ENCODE measurements at regions of chr20 and their contacts with region 1.

Region 1: DNA sequence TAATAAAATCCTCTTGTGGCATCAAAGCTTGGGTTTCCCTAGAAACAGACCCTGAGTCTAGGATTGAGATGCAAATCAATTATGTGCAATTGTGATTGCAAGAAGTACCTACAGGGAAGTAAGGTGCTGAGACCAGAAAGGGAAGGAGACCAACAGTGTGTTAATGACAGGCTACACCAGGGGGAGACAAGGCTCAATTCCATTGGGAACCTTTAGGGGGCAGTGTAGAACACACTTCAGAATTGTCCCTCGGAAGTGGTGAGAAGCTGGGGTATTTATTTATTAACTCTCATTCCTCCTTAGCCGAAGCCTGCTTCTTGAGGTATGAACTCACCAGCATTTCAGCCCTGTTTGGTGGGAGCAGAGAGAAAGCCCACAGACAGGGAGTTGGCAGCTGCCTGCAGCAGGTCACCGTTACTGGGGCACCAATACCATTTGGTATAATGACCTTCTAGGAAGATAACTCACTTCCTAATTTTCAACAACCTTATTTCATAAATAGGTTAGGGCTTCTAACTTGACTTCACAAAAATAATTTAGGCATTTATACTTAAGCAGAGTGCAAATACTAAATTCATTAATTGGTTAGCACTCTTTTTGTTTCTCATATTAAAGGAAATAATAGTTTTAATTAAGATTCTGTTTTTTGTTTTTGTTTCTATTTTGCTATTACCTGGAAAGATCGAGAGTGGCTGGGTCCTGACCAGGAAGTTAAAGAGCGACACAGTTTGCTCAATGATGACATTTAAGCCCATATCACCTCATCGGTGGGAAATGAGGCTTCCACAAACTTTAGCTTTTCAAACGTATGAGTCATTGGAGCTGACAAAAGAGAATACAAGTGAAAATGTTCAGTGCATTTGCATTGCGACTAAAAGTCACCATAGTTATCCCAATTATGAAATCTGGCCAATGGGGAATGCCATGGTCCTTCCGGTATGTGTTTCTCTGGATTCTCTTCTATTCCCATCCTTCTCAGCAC is 94.8 kb downstream of the BTBD3 start:
- DNase-seq: peak; percentile 65
- ATAC-seq: peak; percentile 99
- H3K4me3 Mint-ChIP-seq: no peak overlapping the region
- H3K27ac Mint-ChIP-seq: no peak overlapping the region; the same call in 1 of the 2 replicates
- H3K4me1 Mint-ChIP-seq: peaks cover 18% of the 10 kb centered on the region
- H3K27me3 Mint-ChIP-seq: no peaks in the 10 kb centered on the region
- CTCF ChIP-seq: peak; percentile 92

Region 2: DNA sequence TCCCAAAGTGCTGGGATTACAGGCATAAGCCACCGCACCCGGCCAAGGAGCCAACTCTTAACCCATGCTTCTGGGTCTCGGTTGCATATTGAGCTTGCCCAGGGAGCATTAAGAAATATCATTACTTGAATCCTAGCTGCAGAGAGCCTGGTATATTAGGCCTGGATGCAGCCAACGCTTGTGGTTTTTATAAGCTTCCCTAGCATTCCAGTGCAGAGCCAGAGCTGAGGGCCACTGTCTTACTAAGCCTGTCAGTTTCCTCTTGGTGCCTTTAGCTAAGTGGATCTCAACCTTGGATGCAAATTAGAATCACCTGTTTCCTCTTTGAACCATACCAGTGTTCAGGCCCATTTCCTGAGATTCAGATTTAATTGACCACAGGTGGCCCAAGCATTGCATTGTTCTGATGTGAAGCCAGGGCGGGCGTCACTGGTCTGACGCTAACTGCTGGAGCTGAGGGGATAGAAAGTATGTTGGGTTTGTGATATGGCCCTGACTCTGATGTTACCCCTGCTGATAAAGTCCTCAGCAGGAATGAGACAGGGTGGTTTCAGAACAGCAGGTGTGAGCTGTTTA is 18.6 kb before region 1 on chr20:
- CTCF ChIA-PET with region 1: interaction called, 11 read pairs
- POLR2A ChIA-PET with region 1: no interaction called
- DNase-seq: peak; percentile 25
- ATAC-seq: peak; percentile 87
- H3K4me3 Mint-ChIP-seq: no peak overlapping the region
- H3K27ac Mint-ChIP-seq: 0 out of 2 replicates have a peak overlapping the region, but pooled peaks have one; percentile 46
- H3K4me1 Mint-ChIP-seq: peaks cover 17% of the 10 kb centered on the region
- H3K27me3 Mint-ChIP-seq: no peaks in the 10 kb centered on the region
- CTCF ChIP-seq: no peak

Region 3: DNA sequence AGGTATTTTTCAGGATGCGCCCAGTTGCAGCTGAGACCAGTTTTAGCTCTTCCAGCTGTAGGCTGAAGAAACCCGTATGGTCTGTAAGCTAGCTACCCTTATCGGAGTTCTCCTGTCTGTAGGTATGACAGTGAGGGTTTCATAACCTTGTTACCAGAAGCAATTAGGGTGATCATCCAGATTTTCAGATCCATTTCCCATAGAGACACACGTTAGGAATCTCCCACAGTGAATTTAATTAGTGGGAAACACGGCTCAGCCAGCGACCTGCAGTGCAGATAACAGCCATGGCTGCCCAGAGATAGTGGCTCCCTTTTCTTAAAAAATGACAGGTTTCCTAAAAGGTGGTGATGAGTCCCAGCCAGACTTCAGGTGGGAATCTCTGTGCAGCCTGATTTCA is 16.2 kb after region 1 on chr20:
- CTCF ChIA-PET with region 1: interaction called, 16 read pairs
- POLR2A ChIA-PET with region 1: no interaction called
- DNase-seq: no peak
- ATAC-seq: no peak
- H3K4me3 Mint-ChIP-seq: no peak overlapping the region
- H3K27ac Mint-ChIP-seq: no peak overlapping the region
- H3K4me1 Mint-ChIP-seq: no peaks in the 10 kb centered on the region
- H3K27me3 Mint-ChIP-seq: no peaks in the 10 kb centered on the region
- CTCF ChIP-seq: no peak

Region 4: GRCh38 chr20:12040759-12041158 is 28.2 kb after region 1 on chr20:
- CTCF ChIA-PET with region 1: interaction called, 12 read pairs
- POLR2A ChIA-PET with region 1: no interaction called
- DNase-seq: no peak
- ATAC-seq: no peak
- H3K4me3 Mint-ChIP-seq: no peak overlapping the region
- H3K27ac Mint-ChIP-seq: no peak overlapping the region
- H3K4me1 Mint-ChIP-seq: 0 out of 2 replicates have a peak, but pooled peaks cover 3% of the 10 kb centered on the region
- H3K27me3 Mint-ChIP-seq: no peaks in the 10 kb centered on the region
- CTCF ChIP-seq: no peak

Region 5: DNA sequence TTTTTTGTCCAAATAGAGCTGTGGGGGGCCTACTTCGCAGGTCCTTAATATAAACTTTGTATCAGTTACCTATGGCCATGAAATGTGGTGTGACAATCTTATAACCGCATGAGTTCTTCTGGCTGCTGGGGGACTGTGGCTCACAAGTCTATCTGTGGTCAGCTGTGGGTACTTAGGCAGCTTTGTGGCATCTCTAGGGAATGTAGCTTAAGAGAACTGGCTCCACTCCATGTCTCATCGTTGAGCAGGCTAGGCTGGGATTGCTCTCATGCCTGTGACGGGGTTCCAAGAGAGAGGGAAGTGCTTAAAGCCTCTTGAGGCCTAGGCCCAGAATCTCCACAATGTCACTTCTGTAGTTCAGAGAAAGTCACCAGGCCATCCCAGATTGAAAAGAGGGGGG is 45.7 kb after region 1 on chr20:
- CTCF ChIA-PET with region 1: interaction called, 17 read pairs
- POLR2A ChIA-PET with region 1: no interaction called
- DNase-seq: no peak
- ATAC-seq: peak; percentile 41; the same call in 1 of the 2 replicates
- H3K4me3 Mint-ChIP-seq: no peak overlapping the region
- H3K27ac Mint-ChIP-seq: 0 out of 2 replicates have a peak overlapping the region, but pooled peaks have one; percentile 52
- H3K4me1 Mint-ChIP-seq: peaks cover 13% of the 10 kb centered on the region
- H3K27me3 Mint-ChIP-seq: no peaks in the 10 kb centered on the region
- CTCF ChIP-seq: no peak

Region 6: DNA sequence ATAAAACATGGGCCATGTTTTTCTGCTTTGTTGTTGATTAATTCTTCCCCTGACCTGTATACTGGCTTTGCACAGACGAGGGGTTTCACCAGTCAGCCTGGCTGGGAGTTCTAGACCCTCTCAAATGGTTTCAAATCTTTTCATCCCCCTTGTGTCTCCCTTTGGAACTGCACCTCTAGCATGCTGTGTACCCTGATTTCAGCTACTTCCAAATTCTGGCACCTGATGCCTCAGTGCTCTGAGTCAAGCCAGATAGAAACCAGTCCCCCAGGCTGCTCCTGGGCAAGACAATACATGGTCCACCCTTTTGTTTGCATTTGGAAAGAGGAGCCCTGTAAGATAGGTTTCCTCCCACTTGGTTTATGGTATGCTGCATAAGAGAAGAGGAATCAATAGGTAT is 195.3 kb after region 1 on chr20:
- CTCF ChIA-PET with region 1: interaction called, 12 read pairs
- POLR2A ChIA-PET with region 1: no interaction called
- DNase-seq: peak; percentile 56
- ATAC-seq: peak; percentile 100
- H3K4me3 Mint-ChIP-seq: no peak overlapping the region
- H3K27ac Mint-ChIP-seq: no peak overlapping the region
- H3K4me1 Mint-ChIP-seq: no peaks in the 10 kb centered on the region
- H3K27me3 Mint-ChIP-seq: no peaks in the 10 kb centered on the region; the same call in 1 of the 2 replicates
- CTCF ChIP-seq: peak; percentile 78

Region 7: DNA sequence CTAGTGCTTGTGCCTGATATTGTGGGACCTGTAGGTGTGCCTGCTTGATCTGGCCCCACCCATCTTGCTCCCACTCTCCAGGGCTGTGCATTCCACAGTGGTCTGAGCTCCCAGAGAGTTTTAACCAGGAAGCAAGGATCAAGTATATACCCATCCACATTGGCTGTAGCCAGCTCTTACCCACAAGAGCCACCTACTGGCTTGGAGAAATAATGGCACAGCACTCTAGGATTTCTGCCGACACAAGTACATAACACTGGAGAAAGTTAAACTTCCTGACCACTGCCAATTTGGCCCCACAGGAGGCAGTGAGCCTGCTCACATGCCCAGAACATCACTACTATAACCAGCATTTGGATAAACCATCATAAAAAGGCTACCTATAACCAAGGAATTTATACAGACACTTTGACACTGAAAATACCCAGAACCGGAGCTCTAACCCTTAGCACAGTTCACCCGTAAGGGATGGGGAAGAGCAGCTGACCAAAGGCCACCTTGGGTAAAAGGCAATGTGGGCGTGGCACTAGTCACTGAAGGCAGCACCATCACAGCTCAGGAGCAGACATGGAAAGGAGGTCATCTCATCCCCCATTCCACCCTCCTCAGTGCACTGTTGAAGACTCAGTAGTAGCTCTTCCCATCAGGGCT is 345.6 kb after region 1 on chr20:
- CTCF ChIA-PET with region 1: interaction called, 30 read pairs
- POLR2A ChIA-PET with region 1: no interaction called
- DNase-seq: peak; percentile 17
- ATAC-seq: peak; percentile 96
- H3K4me3 Mint-ChIP-seq: no peak overlapping the region
- H3K27ac Mint-ChIP-seq: no peak overlapping the region
- H3K4me1 Mint-ChIP-seq: peaks cover 15% of the 10 kb centered on the region
- H3K27me3 Mint-ChIP-seq: no peaks in the 10 kb centered on the region
- CTCF ChIP-seq: peak; percentile 26; the same call in 1 of the 2 replicates

Region 8: DNA sequence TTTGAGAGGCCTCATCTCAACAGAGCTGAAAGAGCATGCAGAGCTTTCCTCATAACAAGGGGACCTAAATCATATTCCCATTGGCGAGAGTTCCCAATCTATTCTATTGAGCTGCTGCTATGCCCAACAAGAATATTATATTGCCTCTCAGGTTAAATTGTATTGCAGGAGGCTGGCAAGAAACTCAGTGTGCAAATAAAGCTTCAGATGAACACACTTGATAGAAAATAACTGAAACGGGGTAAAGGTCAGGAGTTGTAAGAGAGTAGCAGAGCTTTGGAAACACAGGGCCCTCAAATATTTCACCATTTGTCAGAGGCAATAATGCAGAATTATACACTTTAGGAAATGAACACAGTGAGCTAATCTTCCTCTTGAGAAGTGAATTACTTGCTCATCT is 631.9 kb after region 1 on chr20:
- CTCF ChIA-PET with region 1: no interaction called
- POLR2A ChIA-PET with region 1: no interaction called
- DNase-seq: no peak
- ATAC-seq: no peak
- H3K4me3 Mint-ChIP-seq: no peak overlapping the region
- H3K27ac Mint-ChIP-seq: no peak overlapping the region
- H3K4me1 Mint-ChIP-seq: peaks cover 16% of the 10 kb centered on the region
- H3K27me3 Mint-ChIP-seq: no peaks in the 10 kb centered on the region
- CTCF ChIP-seq: no peak

Measured in WTC11 (cell line).